PC-9 (cell line): ENCODE measurements at regions of chr7 and their contacts with region 1.

Region 1: DNA sequence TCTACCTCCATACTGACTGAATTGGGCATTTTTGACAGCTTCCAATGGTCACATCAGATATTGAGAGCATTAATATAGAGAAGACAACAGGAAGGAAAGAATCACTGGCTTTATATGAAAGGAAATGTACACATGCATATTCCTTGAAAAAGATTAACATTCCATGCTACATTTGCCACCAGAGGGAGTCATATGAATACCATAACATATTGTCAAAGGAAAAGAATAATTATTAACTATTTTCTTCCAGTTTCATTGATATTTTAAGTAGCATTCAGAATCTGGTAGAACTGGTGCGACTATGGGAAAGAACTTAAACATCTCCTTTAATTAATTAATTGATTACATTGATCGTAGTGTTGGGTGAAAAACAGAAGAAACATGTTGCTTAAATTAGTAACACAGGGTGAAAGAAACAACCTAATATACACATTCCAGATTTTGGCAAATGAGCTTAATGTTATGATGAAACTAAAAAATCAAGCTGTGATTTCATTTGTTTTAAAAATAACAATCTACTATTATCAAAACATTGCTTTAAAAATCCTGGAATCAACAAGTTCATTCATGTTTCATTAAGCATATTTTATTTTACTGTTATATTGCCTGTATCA is 71.5 kb downstream of the GPR85 start:
- DNase-seq: no peak
- H3K4me3 ChIP-seq: no peak overlapping the region
- H3K27ac ChIP-seq: no peak overlapping the region
- H3K4me1 ChIP-seq: no peaks in the 10 kb centered on the region
- H3K27me3 ChIP-seq: no peaks in the 10 kb centered on the region
- CTCF ChIP-seq: peak; percentile 70

Region 2: DNA sequence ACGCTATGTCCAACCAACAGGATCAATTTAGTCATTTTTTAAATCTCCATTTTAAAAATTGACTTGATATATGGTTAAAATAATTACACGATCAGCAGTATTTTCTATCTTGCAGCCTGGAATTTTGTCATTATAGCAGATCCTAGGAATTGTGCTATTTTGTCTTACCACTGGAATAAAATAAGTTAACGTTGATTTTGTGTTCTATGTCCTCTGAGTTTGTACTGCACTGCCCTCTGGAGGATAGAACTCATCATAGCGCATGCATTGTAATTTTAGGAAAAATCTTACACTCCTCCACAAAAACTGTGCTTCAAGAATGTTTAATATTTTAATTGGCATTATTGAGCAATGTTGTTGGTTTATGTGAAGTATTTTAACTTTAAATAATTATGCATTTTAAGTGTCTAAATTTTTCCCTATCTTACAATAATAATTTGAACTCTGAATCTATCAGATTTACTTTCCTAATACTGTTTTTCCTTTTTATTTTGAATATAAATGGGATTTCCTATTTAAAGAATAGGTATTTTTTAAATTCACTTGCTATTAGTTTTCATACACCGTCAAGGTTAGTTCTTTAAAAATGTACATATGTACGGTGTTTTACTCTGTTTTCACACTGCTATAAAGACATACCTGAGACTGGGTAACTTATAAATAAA is 683.5 kb after region 1 on chr7:
- CTCF ChIA-PET with region 1: no interaction called
- POLR2A ChIA-PET with region 1: no interaction called
- intact Hi-C with region 1: loop called (anchors 1 kb)
- DNase-seq: no peak
- H3K4me3 ChIP-seq: no peak overlapping the region
- H3K27ac ChIP-seq: no peak overlapping the region
- H3K4me1 ChIP-seq: no peaks in the 10 kb centered on the region
- H3K27me3 ChIP-seq: no peaks in the 10 kb centered on the region
- CTCF ChIP-seq: peak; percentile 76